GM10248 (cell line): ENCODE measurements at regions of chr19 and their contacts with region 1.

Region 1: DNA sequence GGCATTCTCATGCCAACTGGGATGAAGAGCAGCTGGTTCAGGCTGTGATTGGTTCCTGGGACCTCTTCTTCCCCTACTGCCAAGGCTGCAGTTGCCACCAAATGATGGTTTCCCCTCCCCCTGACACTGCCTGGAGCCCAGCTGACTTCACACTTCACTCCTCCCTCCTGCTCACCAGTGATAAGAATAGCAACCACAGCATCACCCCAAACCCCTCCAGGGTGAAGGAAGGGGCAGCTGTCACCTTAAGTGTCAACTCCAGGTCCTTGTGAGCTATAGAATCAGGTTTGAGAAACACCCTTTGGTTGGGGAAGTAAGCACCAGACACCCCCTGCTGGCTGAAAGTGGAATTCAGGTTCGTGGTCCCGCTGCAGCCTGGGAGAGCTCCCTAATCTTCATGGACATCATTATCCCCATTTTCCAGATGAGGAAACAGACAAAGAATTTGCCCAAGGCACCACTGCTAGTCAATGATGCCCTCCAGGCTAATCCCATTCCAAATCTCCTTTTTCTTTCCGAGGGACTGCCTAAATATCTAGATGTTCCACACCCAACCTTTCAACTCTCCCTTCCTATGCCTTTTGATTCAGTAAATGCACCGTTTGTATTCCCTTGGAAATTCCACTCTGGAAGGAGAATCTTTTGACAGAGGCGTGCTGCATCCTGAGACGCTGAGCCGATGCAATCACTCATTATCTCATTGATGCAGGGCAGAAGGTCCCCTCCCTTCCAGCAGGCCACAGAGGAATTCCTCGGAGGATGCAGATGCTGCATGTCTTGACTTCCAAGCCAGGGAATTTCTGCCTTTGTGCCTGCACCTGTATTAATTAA is 50.6 kb upstream of the UQCRFS1 start:
- DNase-seq: peak; percentile 53
- CTCF ChIP-seq: peak; percentile 70

Region 2: DNA sequence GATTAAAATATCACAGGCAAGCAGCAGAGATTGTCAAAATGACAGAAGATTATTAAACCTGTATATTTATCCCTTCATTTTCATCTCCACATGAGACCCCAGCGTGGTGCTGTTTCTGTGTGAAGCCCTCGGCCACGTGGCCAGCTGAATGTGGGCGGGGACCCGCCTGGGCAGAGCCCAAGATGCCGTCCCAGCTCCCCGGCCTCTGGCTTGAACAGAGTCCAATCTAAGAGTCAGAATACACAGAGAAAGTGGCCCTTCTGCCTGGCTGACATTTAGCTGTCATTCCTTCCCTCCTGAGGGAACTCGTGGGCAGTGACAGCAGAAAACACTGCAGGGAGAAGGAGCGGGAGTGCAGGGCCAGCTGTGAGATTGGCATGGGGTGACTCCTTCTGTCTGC is 15.6 kb before region 1 on chr19:
- CTCF ChIA-PET with region 1: interaction called, 29 read pairs
- POLR2A ChIA-PET with region 1: no interaction called
- DNase-seq: no peak
- CTCF ChIP-seq: no peak

Region 3: GRCh38 chr19:29290853-29291252 is 27.3 kb after region 1 on chr19:
- CTCF ChIA-PET with region 1: interaction called, 10 read pairs
- POLR2A ChIA-PET with region 1: no interaction called
- DNase-seq: no peak
- CTCF ChIP-seq: no peak

Region 4: DNA sequence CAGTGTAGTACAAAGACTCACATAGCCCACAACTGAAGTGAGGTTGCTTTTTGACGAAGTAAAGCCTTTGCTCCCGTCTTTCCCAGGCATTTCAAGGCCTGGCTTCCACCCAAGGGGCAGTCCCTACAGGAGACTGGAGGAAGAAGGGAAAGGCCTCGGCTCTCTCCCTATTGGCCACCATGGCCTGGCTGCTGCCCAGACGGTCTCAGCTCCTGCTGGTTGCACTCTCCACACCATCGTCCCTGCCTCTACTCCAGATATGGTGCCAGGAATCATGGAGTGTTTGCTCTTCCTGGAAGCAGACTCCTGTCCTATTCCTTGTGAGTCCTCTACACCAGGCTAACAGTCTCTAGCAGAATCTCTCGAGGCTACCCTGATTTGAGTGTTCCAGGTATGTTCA is 73.5 kb after region 1 on chr19:
- CTCF ChIA-PET with region 1: no interaction called
- POLR2A ChIA-PET with region 1: no interaction called
- DNase-seq: peak; percentile 1
- CTCF ChIP-seq: no peak